Esophagus squamous epithelium (tissue), 5 donors: ENCODE measurements at regions of chr2 and their contacts with region 1.

Region 1: DNA sequence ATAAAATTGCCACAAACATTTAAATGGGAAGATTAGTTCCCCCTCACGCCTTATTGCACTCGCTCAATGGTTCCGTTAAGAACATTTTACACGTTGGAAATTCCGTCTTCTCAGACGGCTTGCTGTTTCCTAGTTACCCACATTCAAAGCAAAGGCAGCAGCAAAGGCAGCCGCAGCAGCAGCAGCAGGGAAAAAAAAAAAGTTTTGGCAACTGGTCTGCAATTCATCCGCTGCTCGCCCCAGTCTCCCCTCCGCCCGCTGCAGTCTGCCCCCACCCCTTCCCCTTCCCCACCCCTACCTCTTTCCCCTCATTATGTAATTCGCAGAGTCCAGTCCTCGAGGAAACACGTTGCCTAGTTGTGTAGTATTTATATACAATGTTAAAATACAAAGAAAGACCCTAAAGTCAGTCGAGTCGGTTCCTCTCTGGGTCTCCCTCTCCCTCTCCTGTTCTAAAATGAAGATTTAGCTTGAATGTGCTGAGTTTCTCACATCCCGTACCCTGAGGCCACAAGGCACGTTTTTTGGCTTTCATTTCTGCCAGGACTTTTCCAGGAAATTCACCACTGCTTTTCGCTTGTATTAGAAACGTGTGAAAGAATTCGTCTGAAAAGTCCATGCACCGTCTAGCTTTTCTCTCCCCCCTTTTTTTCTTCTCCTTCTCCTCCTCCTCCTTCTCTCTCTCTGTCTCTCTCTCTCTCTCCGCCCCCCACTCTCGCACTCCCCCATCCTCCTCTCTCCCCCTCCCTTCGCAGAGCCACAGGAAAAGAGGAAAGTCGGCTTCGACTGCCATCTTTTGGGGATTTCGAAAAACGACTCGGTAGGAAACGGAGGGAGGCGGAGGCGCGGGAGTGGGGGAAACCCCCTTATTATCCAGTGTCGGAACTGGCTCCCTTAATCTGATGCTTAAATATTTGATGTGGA is 140.0 kb downstream of the MEIS1 start:
- DNase-seq: no peak
- H3K4me3 ChIP-seq: peak overlapping the region; percentile 51 to 77 (median 58)
- H3K27ac ChIP-seq: peak overlapping the region; percentile 78 to 92 (median 88)
- H3K4me1 ChIP-seq: peaks cover 8 to 54% (median 10%) of the 10 kb centered on the region in 3 donors
- H3K27me3 ChIP-seq: peaks cover 0 to 46% (median 0%) of the 10 kb centered on the region in 4 donors
- CTCF ChIP-seq: peak in 4 of 6 experiments; percentile 25 to 47 (median 40)
- POLR2A ChIP-seq: no peak

Region 2: GRCh38 chr2:66434679-66435548 is 140.0 kb before region 1 on chr2 and contains the start of gene MEIS1:
- intact Hi-C with region 1: loop called (anchors 5 kb)
- DNase-seq: peak; percentile 39
- H3K4me3 ChIP-seq: peak within 1 kb of the TSS; percentile 68 to 78 (median 74)
- H3K27ac ChIP-seq: peak within 1 kb of the TSS; percentile 92 to 98 (median 94)
- H3K4me1 ChIP-seq: peaks cover 0 to 21% (median 0%) of the 10 kb centered on the region in 3 donors
- H3K27me3 ChIP-seq: peaks cover 0 to 25% (median 0%) of the 10 kb centered on the region in 4 donors
- CTCF ChIP-seq: no peak
- POLR2A ChIP-seq: peak in 3 of 4 donors; percentile 62 to 95 (median 90)
- total RNA-seq, gene MEIS1: 17.8 to 56.1 (median 28.5) TPM

Region 3: DNA sequence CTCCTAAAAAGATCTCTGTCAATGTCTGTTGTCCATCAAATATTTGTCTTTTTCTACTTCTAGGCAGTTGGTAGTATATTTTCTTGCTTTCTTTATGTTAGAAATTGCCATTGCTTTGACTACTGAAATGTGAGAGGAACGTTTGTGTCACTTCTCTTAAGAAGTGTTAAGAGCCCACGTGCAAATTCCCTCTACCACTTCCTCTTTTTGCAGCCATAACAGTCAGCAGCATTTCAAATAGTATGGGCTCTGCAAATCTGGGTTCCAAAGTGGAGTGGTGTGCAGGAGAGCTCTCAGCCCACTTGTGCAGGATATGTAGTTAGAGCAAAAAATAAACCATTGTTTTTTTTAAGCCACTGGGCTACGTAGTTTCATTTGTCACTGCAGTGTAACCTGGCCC is 174.0 kb after region 1 on chr2:
- intact Hi-C with region 1: no loop called
- DNase-seq: no peak
- H3K4me3 ChIP-seq: no peak overlapping the region
- H3K27ac ChIP-seq: peak overlapping the region in 1 of 4 donors; percentile 53
- H3K4me1 ChIP-seq: no peaks in the 10 kb centered on the region
- H3K27me3 ChIP-seq: no peaks in the 10 kb centered on the region
- CTCF ChIP-seq: no peak
- POLR2A ChIP-seq: no peak

Region 4: GRCh38 chr2:67397143-67397986 is 822.4 kb after region 1 on chr2 and contains the start of gene ETAA1:
- intact Hi-C with region 1: loop called (anchors 10 kb)
- DNase-seq: peak; percentile 56
- H3K4me3 ChIP-seq: peak within 1 kb of the TSS; percentile 69 to 95 (median 83)
- H3K27ac ChIP-seq: peak within 1 kb of the TSS; percentile 94 to 98 (median 95)
- H3K4me1 ChIP-seq: peaks cover 2 to 45% (median 6%) of the 10 kb centered on the region in 3 donors
- H3K27me3 ChIP-seq: no peaks in the 10 kb centered on the region
- CTCF ChIP-seq: no peak
- POLR2A ChIP-seq: peak in 2 of 4 donors; percentile 65 to 85
- total RNA-seq, gene ETAA1: 8.0 to 19.8 (median 10.1) TPM